Gastrocnemius medialis (tissue), 4 donors: ENCODE measurements at regions of chr1 and their contacts with region 1.

Region 1: GRCh38 chr1:100132566-100133477 is at the starts of genes SASS6 and TRMT13:
- DNase-seq: peak; percentile 96
- ATAC-seq: peak; percentile 99
- H3K4me3 ChIP-seq: peak within 1 kb of the TSS; percentile 80 to 90 (median 85)
- H3K27ac ChIP-seq: peak within 1 kb of the TSS; percentile 75 to 85 (median 82)
- H3K4me1 ChIP-seq: peaks cover 20 to 28% of the 10 kb centered on the region in 2 donors
- H3K27me3 ChIP-seq: no peaks in the 10 kb centered on the region
- CTCF ChIP-seq: peak in 3 of 5 experiments; percentile 9 to 28 (median 23)
- POLR2A ChIP-seq: peak; percentile 7 to 20
- total RNA-seq, gene SASS6: 0.71 to 4.2 (median 1.6) TPM
- total RNA-seq, gene TRMT13: 5.5 to 22.6 (median 10.6) TPM

Region 2: DNA sequence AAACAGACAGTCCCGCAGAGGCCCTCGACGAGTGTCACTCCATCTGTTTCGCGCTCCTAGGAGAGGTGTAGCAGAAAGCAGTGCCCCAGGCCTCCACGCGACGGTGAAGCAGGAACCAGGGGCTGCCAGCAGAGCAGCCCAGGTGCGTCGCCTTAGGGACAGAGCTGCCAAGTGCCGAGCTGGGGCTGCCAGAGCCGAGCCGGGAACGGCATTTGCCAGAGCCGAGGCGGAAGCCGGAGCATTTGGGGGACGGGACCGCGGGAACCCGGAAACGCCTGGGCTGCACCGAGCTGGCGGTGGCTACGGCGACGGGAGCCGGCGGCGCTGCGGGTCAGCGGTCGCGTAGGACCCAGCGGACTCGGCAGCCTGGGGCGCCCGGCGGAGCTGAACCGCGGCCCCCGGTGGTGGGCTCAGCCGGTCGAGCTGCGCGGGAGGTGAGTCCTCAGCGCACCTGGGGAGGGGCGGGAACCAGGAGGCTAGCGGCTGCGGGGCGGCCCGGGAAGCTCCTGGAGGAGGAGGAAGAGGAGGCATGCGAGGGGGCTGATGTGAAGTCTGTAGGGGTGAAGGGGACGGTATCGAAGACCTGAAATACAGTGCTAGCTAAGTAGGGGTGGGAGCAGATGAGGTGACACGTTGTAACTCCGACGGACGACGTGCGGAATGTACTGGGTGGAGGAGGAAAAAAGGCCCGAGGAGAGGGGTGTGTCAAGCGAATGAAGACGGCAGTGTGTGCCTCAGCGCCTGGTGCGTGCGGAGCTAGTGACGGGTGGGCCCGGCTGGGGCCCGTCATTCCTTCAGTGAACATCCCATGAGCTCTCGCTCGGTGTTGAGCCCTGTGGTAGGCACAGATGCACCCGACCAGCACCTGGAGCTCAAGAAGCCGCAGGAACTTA is 162.8 kb before region 1 on chr1 and contains the start of gene SLC35A3:
- in situ Hi-C with region 1: no loop called
- intact Hi-C with region 1: loop called (anchors 1 kb)
- DNase-seq: peak; percentile 51 to 72
- ATAC-seq: peak; percentile 85 to 92
- H3K4me3 ChIP-seq: peak within 1 kb of the TSS; percentile 84 to 95 (median 86)
- H3K27ac ChIP-seq: peak within 1 kb of the TSS; percentile 58 to 76 (median 72)
- H3K4me1 ChIP-seq: peaks cover 6 to 8% of the 10 kb centered on the region in 2 donors
- H3K27me3 ChIP-seq: no peaks in the 10 kb centered on the region
- CTCF ChIP-seq: no peak
- POLR2A ChIP-seq: peak in 1 of 2 donors; percentile 10
- total RNA-seq, gene SLC35A3: 4.6 to 10.3 (median 8.2) TPM

Region 3: DNA sequence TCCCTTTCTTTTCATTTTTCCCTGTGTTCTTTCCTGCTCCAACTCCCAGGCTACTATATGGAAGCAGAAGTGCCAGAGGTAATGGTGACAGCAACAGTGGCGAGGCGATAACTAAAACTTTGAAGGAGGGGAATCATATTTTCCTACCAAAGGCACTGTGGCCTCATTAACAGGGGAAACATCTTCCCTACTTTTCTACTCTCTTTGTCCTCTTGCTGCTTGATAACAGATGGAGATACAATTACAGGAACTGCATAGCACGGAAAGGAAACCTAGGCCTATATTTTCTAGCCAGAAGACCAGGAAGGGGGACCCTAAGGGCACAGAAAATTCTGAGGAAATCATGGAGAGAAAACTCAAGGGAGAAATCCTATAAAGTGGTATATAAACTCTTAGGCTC is 42.4 kb before region 1 on chr1:
- in situ Hi-C with region 1: no loop called
- intact Hi-C with region 1: no loop called
- DNase-seq: no peak
- ATAC-seq: no peak
- H3K4me3 ChIP-seq: no peak overlapping the region
- H3K27ac ChIP-seq: no peak overlapping the region
- H3K4me1 ChIP-seq: no peaks in the 10 kb centered on the region
- H3K27me3 ChIP-seq: no peaks in the 10 kb centered on the region
- CTCF ChIP-seq: no peak
- POLR2A ChIP-seq: no peak

Region 4: DNA sequence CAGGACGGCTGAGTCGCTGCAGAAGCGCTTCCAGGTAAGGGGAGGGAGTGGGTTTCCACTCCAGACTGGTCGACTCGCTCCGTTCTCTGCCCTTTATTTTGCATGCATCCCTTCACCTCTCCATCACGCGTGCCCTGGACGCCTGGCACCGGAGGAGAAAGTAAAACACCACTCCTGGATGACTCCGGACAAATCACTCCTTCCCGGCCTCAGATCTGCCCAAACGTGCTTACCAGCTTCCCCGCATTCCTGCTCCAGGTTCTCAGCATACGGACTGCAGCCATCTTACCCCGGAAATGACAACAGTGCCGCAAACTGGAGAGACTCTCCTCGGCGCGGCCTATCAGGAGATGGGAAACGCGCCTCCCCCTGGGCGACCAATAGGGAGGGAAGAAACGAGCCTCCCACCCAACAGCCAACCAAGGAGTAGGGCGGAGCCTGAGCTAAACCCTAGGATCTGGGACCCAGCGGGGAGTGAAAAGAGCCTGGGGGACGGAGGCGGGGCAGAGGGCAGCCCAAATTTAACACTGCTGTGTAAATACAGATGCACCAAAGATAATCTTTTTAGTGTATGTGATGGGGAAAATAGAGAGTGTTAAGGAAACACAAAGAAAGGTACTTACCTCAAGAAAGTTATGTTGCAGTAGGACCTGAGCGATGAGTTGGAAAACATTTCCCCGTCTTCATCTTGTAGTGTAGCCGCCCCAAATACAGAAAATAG is 116.9 kb after region 1 on chr1 and contains the start of gene DBT:
- in situ Hi-C with region 1: loop called in 1 of 4 experiments (anchors 10 kb)
- intact Hi-C with region 1: loop called (anchors 5 kb)
- DNase-seq: peak; percentile 96 to 97
- ATAC-seq: peak; percentile 100
- H3K4me3 ChIP-seq: peak within 1 kb of the TSS; percentile 79 to 96 (median 88)
- H3K27ac ChIP-seq: peak within 1 kb of the TSS; percentile 88 to 95 (median 90)
- H3K4me1 ChIP-seq: peaks cover 8 to 11% of the 10 kb centered on the region in 2 donors
- H3K27me3 ChIP-seq: no peaks in the 10 kb centered on the region
- CTCF ChIP-seq: no peak
- POLR2A ChIP-seq: peak; percentile 74 to 84
- total RNA-seq, gene DBT: 7.6 to 11.3 (median 9.6) TPM

Region 5: GRCh38 chr1:100265931-100266740 is 133.3 kb after region 1 on chr1 and contains the start of gene RTCA:
- in situ Hi-C with region 1: no loop called
- intact Hi-C with region 1: loop called (anchors 1 kb)
- DNase-seq: peak; percentile 93 to 95
- ATAC-seq: peak; percentile 99
- H3K4me3 ChIP-seq: peak within 1 kb of the TSS; percentile 67 to 100 (median 91)
- H3K27ac ChIP-seq: peak within 1 kb of the TSS; percentile 82 to 93 (median 86)
- H3K4me1 ChIP-seq: peaks cover 15 to 19% of the 10 kb centered on the region in 2 donors
- H3K27me3 ChIP-seq: no peaks in the 10 kb centered on the region
- CTCF ChIP-seq: no peak
- POLR2A ChIP-seq: peak; percentile 64 to 73
- total RNA-seq, gene RTCA: 22.3 to 32.8 (median 24.8) TPM

Region 6: DNA sequence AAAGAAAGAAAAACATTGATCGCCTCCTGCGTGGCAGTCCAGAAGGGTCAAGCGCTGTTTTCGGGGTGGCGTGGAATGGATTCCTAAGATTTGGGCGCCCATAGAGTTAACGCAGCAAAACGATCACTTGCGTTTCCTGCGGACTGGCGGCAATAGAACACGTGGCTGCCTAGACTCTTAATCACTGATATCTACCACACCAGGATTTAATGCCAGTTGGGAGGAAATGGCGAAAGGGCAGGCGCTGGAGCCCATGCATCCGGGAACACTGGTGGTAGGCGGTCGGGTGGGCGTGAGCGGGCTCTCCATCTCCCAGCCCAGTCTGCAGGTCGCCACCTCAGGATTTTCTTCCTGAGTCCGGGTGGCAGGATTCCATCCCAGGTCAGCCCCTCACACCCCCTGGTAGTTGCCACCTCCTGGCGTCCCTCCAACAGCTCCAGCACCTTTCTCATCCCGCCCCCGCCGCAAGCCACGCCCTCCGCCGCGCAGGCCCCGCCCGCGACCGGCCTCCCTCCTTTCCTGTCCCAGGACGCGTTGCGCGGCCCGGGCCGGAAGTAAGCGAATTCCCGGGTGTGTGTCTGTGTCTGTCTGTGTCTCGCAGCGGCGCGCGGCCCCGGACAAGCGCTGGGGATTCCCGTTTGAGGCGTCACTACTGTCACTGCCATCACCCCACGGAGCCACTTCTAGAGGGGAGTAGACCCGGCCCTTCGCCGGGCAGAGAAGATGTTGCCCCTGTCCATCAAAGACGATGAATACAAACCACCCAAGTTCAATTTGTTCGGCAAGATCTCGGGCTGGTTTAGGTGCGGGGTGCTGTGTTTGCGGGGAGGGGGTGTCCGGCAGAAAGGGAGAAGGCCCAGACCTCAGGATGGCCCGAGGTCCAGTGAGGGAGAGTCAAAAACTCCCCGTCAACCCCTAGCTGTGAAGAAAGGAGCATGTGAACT is 763.0 kb after region 1 on chr1 and contains the start of gene SLC30A7:
- in situ Hi-C with region 1: loop called in 1 of 4 experiments (anchors 10 kb)
- intact Hi-C with region 1: loop called (anchors 2 kb)
- DNase-seq: peak; percentile 87 to 92
- ATAC-seq: peak; percentile 80 to 86
- H3K4me3 ChIP-seq: peak within 1 kb of the TSS; percentile 66 to 99 (median 86)
- H3K27ac ChIP-seq: peak within 1 kb of the TSS; percentile 94 to 99 (median 94)
- H3K4me1 ChIP-seq: peaks cover 21 to 29% of the 10 kb centered on the region in 2 donors
- H3K27me3 ChIP-seq: no peaks in the 10 kb centered on the region
- CTCF ChIP-seq: no peak
- POLR2A ChIP-seq: peak; percentile 60 to 79
- total RNA-seq, gene SLC30A7: 1.5 to 6.2 (median 3.5) TPM